ENCODE measurements at regions of chr6 and their contacts with region 1.

Region 1: GRCh38 chr6:123316733-123317323 is 319.9 kb downstream of the TRDN start:
- DNase-seq: no peak
- H3K4me3 ChIP-seq: no peak overlapping the region
- H3K27ac ChIP-seq: no peak overlapping the region
- H3K4me1 ChIP-seq: no peaks in the 10 kb centered on the region
- H3K27me3 ChIP-seq: no peaks in the 10 kb centered on the region
- CTCF ChIP-seq: peak; percentile 46

Region 2: GRCh38 chr6:122869437-122870024 is 447.3 kb before region 1 on chr6:
- intact Hi-C with region 1: loop called (anchors 5 kb)
- DNase-seq: peak; percentile 24
- H3K4me3 ChIP-seq: no peak overlapping the region
- H3K27ac ChIP-seq: no peak overlapping the region
- H3K4me1 ChIP-seq: no peaks in the 10 kb centered on the region
- H3K27me3 ChIP-seq: no peaks in the 10 kb centered on the region
- CTCF ChIP-seq: peak; percentile 52

Region 3: GRCh38 chr6:123085417-123085816 is 231.4 kb before region 1 on chr6:
- intact Hi-C with region 1: no loop called
- DNase-seq: no peak
- H3K4me3 ChIP-seq: no peak overlapping the region
- H3K27ac ChIP-seq: no peak overlapping the region
- H3K4me1 ChIP-seq: no peaks in the 10 kb centered on the region
- H3K27me3 ChIP-seq: no peaks in the 10 kb centered on the region
- CTCF ChIP-seq: no peak